ENCODE measurements at regions of chr7 and their contacts with region 1.

Region 1: GRCh38 chr7:55365675-55366460 is 731 bp downstream of the LANCL2 start:
- DNase-seq: peak; percentile 96
- ATAC-seq: peak; percentile 93
- H3K4me3 ChIP-seq: peak overlapping the region; percentile 91
- H3K27ac ChIP-seq: peak overlapping the region; percentile 96
- H3K4me1 ChIP-seq: peaks cover 7% of the 10 kb centered on the region
- H3K27me3 ChIP-seq: no peaks in the 10 kb centered on the region
- CTCF ChIP-seq: peak; percentile 32
- POLR2A ChIP-seq: peak; percentile 88
- RAD21 ChIP-seq: peak; percentile 7; the same call in 1 of the 2 replicates

Region 2: GRCh38 chr7:55309040-55309991 is 56.6 kb before region 1 on chr7:
- CTCF ChIA-PET with region 1: no interaction called
- POLR2A ChIA-PET with region 1: no interaction called
- dilution Hi-C with region 1: no loop called
- in situ Hi-C with region 1: no loop called
- intact Hi-C with region 1: loop called (anchors 5 kb)
- DNase-seq: no peak
- ATAC-seq: no peak
- H3K4me3 ChIP-seq: no peak overlapping the region
- H3K27ac ChIP-seq: no peak overlapping the region
- H3K4me1 ChIP-seq: peaks cover 6% of the 10 kb centered on the region
- H3K27me3 ChIP-seq: peaks cover 7% of the 10 kb centered on the region
- CTCF ChIP-seq: no peak
- POLR2A ChIP-seq: no peak
- RAD21 ChIP-seq: no peak

Region 3: GRCh38 chr7:55409482-55410225 is 43.8 kb after region 1 on chr7:
- CTCF ChIA-PET with region 1: interaction called, 3 read pairs
- POLR2A ChIA-PET with region 1: no interaction called
- dilution Hi-C with region 1: no loop called
- in situ Hi-C with region 1: no loop called
- intact Hi-C with region 1: loop called (anchors 5 kb)
- DNase-seq: peak; percentile 35
- ATAC-seq: peak; percentile 37; the same call in 1 of the 2 replicates
- H3K4me3 ChIP-seq: no peak overlapping the region
- H3K27ac ChIP-seq: no peak overlapping the region
- H3K4me1 ChIP-seq: no peaks in the 10 kb centered on the region
- H3K27me3 ChIP-seq: no peaks in the 10 kb centered on the region
- CTCF ChIP-seq: peak; percentile 25; the same call in 1 of the 2 replicates
- POLR2A ChIP-seq: no peak
- RAD21 ChIP-seq: 0 out of 2 replicates have a peak, but pooled peaks have one; percentile 25

Measured in IMR-90 (cell line).